ENCODE measurements at regions of chr11 and their contacts with region 1.

Region 1: DNA sequence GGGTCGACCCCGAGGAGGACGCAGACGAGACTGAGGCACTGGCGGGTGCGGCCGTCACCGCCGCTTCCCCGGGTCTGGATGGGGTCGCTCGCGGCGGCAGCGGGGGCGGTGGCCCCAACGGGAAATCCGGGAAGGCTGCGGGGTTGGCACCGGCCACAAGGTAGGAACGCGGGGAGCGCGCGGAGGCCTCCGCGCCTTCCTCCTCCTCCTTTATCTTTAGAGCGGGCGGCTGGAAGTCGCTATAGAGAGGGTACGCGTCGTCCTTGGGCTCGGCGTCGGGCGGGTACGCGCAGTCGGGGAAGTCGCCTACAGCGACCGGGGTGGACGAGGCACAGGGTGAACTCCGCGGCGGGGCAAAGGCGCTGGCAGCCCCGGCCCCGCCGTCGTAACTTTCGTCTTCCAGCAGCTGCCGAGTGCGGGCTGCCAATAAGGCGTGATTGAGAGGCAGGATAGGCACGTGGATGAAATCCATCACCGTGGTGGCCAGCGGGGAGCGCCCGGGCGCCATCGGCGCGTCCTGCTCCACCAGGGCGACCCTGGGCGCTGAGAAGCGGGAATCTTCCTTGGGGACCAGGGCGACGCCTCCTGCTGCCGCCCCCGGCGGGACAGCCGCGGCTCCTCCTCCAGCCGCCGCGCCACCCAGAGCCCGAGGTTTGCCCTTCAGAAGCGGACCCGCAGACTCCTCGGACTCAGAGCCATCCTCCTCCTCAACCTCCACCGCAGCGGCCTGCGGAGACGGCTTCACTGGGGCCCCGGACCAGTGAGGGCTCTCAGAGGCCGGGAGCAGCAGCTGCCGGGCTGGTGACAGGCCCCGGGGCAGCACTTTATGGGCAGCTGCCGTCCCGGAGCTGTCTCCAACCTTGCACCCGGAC is 1.7 kb downstream of the PGR start:
- DNase-seq: peak; percentile 24 to 40 (median 34)
- ATAC-seq: peak; percentile 60
- H3K4me3 ChIP-seq: peak overlapping the region; percentile 54
- H3K27ac ChIP-seq: peak overlapping the region; percentile 70; the same call in 2 of the 3 replicates
- H3K4me1 ChIP-seq: peaks cover 0 to 27% of the 10 kb centered on the region in 2 experiments; a peak in 3 of 5 replicates
- H3K27me3 ChIP-seq: peaks cover 0 to 13% of the 10 kb centered on the region in 2 experiments; a peak in 2 of 5 replicates
- CTCF ChIP-seq: no peak
- EP300 ChIP-seq: no peak
- POLR2A ChIP-seq: no peak
- RAD21 ChIP-seq: no peak

Region 2: GRCh38 chr11:100970283-100971164 is 157.4 kb before region 1 on chr11:
- CTCF ChIA-PET with region 1: no interaction called
- POLR2A ChIA-PET with region 1: interaction called, 3 read pairs
- in situ Hi-C with region 1: no loop called
- intact Hi-C with region 1: loop called (anchors 10 kb)
- DNase-seq: peak in 2 of 4 experiments; percentile 19 to 67
- ATAC-seq: peak; percentile 72
- H3K4me3 ChIP-seq: no peak overlapping the region
- H3K27ac ChIP-seq: peak overlapping the region; percentile 82
- H3K4me1 ChIP-seq: peaks cover 0 to 28% of the 10 kb centered on the region in 2 experiments; a peak in 3 of 5 replicates
- H3K27me3 ChIP-seq: no peaks in the 10 kb centered on the region
- CTCF ChIP-seq: no peak
- EP300 ChIP-seq: peak; percentile 31; the same call in 1 of the 2 replicates
- POLR2A ChIP-seq: no peak
- RAD21 ChIP-seq: no peak

Region 3: GRCh38 chr11:101049123-101049522 is 78.8 kb before region 1 on chr11:
- CTCF ChIA-PET with region 1: no interaction called
- POLR2A ChIA-PET with region 1: no interaction called
- in situ Hi-C with region 1: no loop called
- intact Hi-C with region 1: loop called (anchors 5 kb)
- DNase-seq: peak in 2 of 4 experiments; percentile 22 to 68
- ATAC-seq: peak; percentile 94
- H3K4me3 ChIP-seq: no peak overlapping the region
- H3K27ac ChIP-seq: peak overlapping the region; percentile 47; the same call in 2 of the 3 replicates
- H3K4me1 ChIP-seq: peaks cover 0 to 4% of the 10 kb centered on the region in 2 experiments; a peak in 2 of 5 replicates
- H3K27me3 ChIP-seq: no peaks in the 10 kb centered on the region
- CTCF ChIP-seq: peak in 2 of 3 experiments; percentile 11 to 24; a peak in 2 of 6 replicates
- EP300 ChIP-seq: no peak
- POLR2A ChIP-seq: no peak
- RAD21 ChIP-seq: peak in 1 of 2 experiments; percentile 9; a peak in 1 of 4 replicates